ENCODE measurements at regions of chr2 and their contacts with region 1.

Region 1: GRCh38 chr2:231900486-231900942 is 25.7 kb downstream of the NPPC start:
- DNase-seq: peak in 41 of 42 donors; percentile 34 to 88 (median 72)

Region 2: GRCh38 chr2:231612179-231613053 is 288.1 kb before region 1 on chr2:
- intact Hi-C with region 1: no loop called
- DNase-seq: peak; percentile 79 to 98 (median 93)

Region 3: GRCh38 chr2:232327105-232328041 is 426.9 kb after region 1 on chr2:
- intact Hi-C with region 1: loop called (anchors 5 kb)
- DNase-seq: peak in 41 of 42 donors; percentile 48 to 90 (median 78)

Region 4: DNA sequence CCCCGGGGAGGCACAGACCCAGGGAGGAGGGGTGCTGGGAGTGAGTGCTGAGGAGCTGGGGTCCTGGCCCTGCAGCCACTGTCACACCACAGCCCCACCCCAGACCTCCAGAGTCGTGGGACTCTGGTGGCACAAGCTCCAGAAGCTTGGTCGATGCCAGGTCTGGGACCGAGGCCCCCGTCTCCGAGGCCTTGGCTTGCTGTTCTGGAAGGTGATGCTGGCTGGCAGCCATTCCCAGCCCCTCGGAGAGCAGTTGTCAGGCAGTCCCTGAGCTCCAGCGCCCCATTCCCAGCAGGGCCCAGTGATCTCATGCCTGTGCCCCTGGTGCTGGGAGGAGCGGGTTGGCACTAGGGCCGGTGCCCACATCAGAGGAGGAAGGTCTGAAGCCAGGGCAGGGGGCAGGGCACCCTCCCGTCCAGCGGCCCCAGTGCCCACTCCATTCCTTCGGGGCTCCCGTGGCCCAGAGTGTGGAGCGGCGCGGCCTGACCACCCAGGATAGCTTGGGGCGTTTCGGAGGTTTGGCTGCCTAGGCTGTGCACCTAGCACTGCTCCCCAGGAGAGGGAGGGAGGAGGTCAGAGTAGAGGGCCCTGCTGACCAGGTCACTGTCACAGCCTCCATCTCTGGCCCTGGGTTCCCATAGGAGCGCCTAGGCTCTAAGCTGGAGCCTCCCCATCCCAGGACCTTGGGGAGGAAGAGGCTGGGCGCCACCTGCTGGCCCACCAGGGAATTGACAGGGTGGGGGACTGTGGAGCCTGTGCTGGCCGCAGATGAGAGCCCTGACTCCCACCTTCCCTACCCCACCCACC is 538.6 kb after region 1 on chr2:
- intact Hi-C with region 1: loop called (anchors 5 kb)
- DNase-seq: peak in 29 of 42 donors; percentile 16 to 75 (median 50)

Region 5: GRCh38 chr2:232521959-232522622 is 621.6 kb after region 1 on chr2:
- intact Hi-C with region 1: loop called (anchors 10 kb)
- DNase-seq: peak in 40 of 42 donors; percentile 35 to 88 (median 70)